MCF 10A (cell line): ENCODE measurements at regions of chr1 and their contacts with region 1.

Region 1: GRCh38 chr1:153946622-153947241 is at the start of gene DENND4B:
- DNase-seq: peak; percentile 88
- H3K4me3 Mint-ChIP-seq: peak within 1 kb of the TSS; percentile 90
- H3K27ac Mint-ChIP-seq: peak within 1 kb of the TSS; percentile 88
- H3K4me1 Mint-ChIP-seq: peaks cover 21% of the 10 kb centered on the region
- H3K27me3 Mint-ChIP-seq: no peaks in the 10 kb centered on the region
- CTCF ChIP-seq: peak; percentile 98
- total RNA-seq, gene DENND4B: 59.6 and 79.1 TPM in 2 replicates

Region 2: GRCh38 chr1:153805042-153805745 is 141.5 kb before region 1 on chr1:
- CTCF ChIA-PET with region 1: interaction called, 11 read pairs
- POLR2A ChIA-PET with region 1: interaction called, 6 read pairs
- intact Hi-C with region 1: no loop called
- DNase-seq: peak; percentile 95
- H3K4me3 Mint-ChIP-seq: peak overlapping the region; percentile 60
- H3K27ac Mint-ChIP-seq: peak overlapping the region; percentile 99
- H3K4me1 Mint-ChIP-seq: peaks cover 32% of the 10 kb centered on the region
- H3K27me3 Mint-ChIP-seq: no peaks in the 10 kb centered on the region
- CTCF ChIP-seq: no peak

Region 3: DNA sequence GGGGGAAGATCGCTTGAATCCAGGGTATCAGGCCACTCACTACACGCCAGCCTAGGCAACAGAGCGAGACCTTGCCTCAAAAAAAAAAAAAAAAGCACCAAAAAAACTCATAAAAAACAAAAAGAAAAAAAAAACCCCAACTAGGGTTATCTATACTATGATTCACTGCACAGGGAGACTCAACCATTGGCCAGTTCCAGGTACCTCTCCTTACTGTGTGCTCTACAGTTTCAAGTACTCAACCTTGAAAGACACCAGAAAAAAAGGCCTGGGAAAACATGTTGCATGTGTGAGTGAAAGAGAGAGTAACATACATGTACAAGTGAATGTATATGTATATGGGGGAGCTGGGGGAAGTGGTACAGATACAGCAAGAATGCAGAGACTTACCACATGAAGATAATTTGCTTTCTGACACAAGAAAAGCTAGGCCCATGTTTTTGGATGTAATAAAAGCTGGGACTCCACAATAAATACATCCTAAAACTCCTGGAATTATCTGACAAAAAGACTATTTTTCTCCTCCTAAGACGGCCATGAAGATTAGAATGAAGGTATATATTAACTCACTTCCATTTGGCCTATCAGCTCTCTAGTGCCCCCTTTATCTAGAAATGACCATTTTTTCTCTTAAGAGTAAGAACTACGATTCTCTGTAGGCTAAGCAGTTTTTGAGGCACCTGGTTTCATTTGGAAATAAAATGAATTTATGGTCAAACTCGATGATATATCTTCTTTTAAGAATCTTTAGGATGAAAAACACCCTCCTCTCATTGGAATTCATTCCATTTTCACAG is 119.4 kb before region 1 on chr1:
- CTCF ChIA-PET with region 1: interaction called, 12 read pairs
- POLR2A ChIA-PET with region 1: interaction called, 11 read pairs
- intact Hi-C with region 1: no loop called
- DNase-seq: no peak
- H3K4me3 Mint-ChIP-seq: no peak overlapping the region
- H3K27ac Mint-ChIP-seq: peak overlapping the region; percentile 31
- H3K4me1 Mint-ChIP-seq: peaks cover 5% of the 10 kb centered on the region
- H3K27me3 Mint-ChIP-seq: no peaks in the 10 kb centered on the region
- CTCF ChIP-seq: peak; percentile 12

Region 4: DNA sequence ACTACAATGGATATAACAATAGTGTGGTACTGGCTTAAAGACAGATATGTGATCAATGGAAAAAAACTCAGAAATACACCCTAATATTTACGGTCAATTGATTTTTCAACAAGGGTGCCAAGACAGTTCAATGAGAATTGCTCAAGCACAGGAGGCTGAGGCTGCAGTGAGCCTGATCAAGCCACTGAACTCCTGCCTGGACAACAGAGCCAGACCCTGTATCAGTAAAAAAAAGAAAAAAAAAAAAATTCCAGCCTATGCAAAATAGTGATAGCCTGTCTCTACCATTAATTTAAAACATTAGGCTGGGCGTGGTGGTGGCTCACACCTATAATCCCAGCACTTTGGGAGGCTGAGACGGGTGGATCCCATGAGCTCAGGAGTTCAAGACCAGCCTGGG is 101.6 kb before region 1 on chr1:
- CTCF ChIA-PET with region 1: no interaction called
- POLR2A ChIA-PET with region 1: no interaction called
- intact Hi-C with region 1: no loop called
- DNase-seq: no peak
- H3K4me3 Mint-ChIP-seq: no peak overlapping the region
- H3K27ac Mint-ChIP-seq: no peak overlapping the region
- H3K4me1 Mint-ChIP-seq: peaks cover 6% of the 10 kb centered on the region
- H3K27me3 Mint-ChIP-seq: no peaks in the 10 kb centered on the region
- CTCF ChIP-seq: no peak

Region 5: DNA sequence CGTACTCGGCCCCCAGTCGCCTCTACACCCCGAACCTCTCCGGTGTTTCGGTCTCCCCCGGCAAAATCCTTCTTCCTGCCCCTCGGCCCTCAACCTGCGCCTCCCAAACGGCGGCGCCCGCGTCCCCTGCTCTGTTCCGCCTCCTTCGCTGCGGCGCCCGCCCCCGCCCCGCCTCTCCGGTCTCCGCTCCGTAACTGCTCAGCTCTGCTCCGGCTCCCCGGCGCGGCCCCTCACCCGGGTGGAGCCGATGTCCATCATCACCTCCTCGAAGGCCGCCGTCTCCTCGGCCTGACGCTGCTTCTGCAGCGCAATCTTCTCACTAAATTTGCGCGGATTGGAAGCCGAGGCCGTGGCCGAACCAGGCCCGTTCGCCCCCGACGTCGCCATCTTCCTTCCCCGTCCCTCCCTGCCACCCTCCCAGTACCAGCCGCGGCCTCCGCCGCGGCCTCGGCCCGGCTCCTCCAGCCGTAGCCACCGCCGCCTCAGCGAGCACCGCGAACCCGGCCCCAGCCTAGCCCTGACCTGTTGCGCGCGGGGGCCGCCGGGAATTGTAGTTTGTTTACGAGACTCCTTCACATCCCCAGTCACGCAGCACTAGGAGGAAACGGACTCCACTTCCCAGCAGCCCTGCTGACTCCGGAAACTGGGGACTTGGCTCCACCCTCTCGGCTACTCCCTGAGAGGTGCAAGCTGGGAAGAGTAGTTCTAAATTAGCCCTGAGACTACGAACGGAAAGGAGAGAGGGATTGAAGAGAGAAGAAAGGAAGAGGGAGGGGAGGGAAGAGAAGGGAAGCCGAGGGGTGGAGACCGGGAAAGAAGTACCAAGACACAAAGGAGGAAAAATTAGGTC is 11.6 kb after region 1 on chr1 and contains the start of gene CRTC2:
- CTCF ChIA-PET with region 1: interaction called, 60 read pairs
- POLR2A ChIA-PET with region 1: interaction called, 430 read pairs
- intact Hi-C with region 1: no loop called
- DNase-seq: peak; percentile 100
- H3K4me3 Mint-ChIP-seq: peak within 1 kb of the TSS; percentile 96
- H3K27ac Mint-ChIP-seq: peak within 1 kb of the TSS; percentile 92
- H3K4me1 Mint-ChIP-seq: peaks cover 55% of the 10 kb centered on the region
- H3K27me3 Mint-ChIP-seq: no peaks in the 10 kb centered on the region
- CTCF ChIP-seq: no peak
- total RNA-seq, gene CRTC2: 47.0 and 55.1 TPM in 2 replicates

Region 6: DNA sequence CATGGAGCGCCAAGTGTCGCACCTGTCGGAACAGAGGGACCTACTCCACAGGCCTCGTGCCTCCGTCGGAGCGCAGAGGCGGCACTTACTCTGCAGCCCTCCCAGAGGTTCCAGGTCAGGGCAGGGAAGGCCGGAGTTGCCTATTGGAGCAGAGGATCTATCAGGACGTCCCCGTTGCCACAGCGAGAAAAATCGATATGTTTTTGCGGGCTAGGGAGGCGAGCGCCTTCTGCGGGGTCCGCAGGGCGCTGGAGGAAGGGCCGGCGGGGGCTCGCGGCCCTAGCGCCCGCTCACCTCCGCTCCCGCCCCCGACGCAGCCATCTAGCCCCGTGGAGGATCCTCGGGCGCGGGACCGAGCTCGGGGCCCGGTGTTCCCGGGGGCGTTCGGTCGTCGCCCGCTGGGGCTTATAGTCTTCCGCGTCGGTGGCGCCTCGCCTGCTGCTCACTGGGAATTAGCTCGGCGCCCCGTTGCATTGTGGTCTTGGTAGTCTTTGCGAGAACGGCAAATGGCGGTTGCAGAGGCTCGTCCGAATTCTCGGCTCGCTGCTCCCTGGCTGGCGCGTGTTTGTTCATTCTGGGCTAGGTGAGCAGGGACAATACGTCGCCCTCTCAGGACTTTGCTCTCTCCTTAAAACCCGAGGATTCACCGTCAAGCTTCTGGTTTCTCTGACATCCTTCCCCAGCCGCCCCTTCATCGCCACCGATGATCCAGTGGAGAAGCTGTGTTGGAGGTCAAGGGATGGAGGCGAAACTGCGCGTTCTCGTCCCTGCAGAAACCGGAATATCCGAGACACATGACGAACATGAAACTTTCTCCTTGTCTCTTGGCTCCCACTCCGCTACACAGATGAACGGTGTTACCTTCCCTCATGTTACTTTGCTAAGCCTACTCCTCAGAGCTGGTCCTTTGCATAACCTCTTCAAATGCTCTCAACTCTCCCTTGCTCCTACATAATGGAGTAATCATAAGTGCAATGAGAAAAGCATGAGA is 30.8 kb after region 1 on chr1 and contains the start of gene JTB:
- CTCF ChIA-PET with region 1: interaction called, 7 read pairs
- POLR2A ChIA-PET with region 1: interaction called, 37 read pairs
- intact Hi-C with region 1: no loop called
- DNase-seq: peak; percentile 93
- H3K4me3 Mint-ChIP-seq: peak within 1 kb of the TSS; percentile 98
- H3K27ac Mint-ChIP-seq: peak within 1 kb of the TSS; percentile 96
- H3K4me1 Mint-ChIP-seq: peaks cover 23% of the 10 kb centered on the region
- H3K27me3 Mint-ChIP-seq: no peaks in the 10 kb centered on the region
- CTCF ChIP-seq: no peak
- total RNA-seq, gene JTB: 194 and 224 TPM in 2 replicates

Region 7: GRCh38 chr1:154145986-154146385 is 199.3 kb after region 1 on chr1:
- CTCF ChIA-PET with region 1: no interaction called
- POLR2A ChIA-PET with region 1: no interaction called
- intact Hi-C with region 1: no loop called
- DNase-seq: peak; percentile 26
- H3K4me3 Mint-ChIP-seq: no peak overlapping the region
- H3K27ac Mint-ChIP-seq: no peak overlapping the region
- H3K4me1 Mint-ChIP-seq: peaks cover 5% of the 10 kb centered on the region
- H3K27me3 Mint-ChIP-seq: no peaks in the 10 kb centered on the region
- CTCF ChIP-seq: no peak